Sigmoid colon (tissue), 7 donors: ENCODE measurements at regions of chr18 and their contacts with region 1.

Region 1: DNA sequence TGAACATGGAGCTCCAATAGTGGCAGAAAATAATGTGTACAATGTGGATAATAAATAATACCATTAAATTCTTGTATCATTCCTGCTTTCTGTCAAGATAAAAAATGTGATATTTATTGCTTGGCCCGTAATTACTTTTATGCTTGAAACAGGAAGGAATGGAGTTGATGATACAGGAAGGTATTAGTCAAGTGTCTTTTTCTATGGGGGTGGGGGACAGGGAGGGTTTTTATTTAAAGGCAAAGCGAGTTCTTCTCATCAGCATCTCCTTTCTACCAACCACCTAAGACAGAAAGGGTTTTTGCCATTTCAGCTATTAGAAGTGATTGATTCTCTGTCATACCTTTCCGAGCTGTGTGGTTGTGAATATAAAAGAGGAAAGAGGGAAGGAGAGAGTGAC is 135.3 kb downstream of the DCC start:
- DNase-seq: no peak
- H3K4me3 ChIP-seq: no peak overlapping the region
- H3K27ac ChIP-seq: no peak overlapping the region
- H3K4me1 ChIP-seq: no peaks in the 10 kb centered on the region
- H3K27me3 ChIP-seq: no peaks in the 10 kb centered on the region
- CTCF ChIP-seq: no peak
- EP300 ChIP-seq: no peak
- POLR2A ChIP-seq: no peak

Region 2: GRCh38 chr18:52000435-52000834 is 474.9 kb before region 1 on chr18:
- intact Hi-C with region 1: no loop called
- DNase-seq: no peak
- H3K4me3 ChIP-seq: no peak overlapping the region
- H3K27ac ChIP-seq: no peak overlapping the region
- H3K4me1 ChIP-seq: no peaks in the 10 kb centered on the region
- H3K27me3 ChIP-seq: no peaks in the 10 kb centered on the region
- CTCF ChIP-seq: no peak
- EP300 ChIP-seq: no peak
- POLR2A ChIP-seq: no peak

Region 3: DNA sequence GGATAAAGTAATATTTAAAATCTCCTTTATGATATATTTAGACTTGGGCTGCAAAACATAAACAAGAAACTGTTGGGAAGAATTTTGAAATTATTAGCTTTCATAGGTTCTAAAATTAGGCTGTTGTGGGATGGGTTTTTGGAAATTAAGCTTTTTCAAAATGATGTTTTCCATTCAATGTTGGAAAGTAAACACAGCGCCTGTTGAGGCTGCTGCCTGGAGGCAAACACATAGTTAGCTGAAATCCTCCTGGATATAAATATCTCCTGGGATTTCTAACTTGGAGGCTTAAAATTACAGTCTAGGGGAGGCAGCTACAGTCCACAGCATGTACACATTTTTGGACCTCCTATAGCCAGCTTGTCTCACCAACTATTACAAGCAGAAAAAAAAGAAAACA is 61.9 kb after region 1 on chr18:
- intact Hi-C with region 1: no loop called
- DNase-seq: no peak
- H3K4me3 ChIP-seq: no peak overlapping the region
- H3K27ac ChIP-seq: no peak overlapping the region
- H3K4me1 ChIP-seq: no peaks in the 10 kb centered on the region
- H3K27me3 ChIP-seq: no peaks in the 10 kb centered on the region
- CTCF ChIP-seq: no peak
- EP300 ChIP-seq: no peak
- POLR2A ChIP-seq: no peak

Region 4: DNA sequence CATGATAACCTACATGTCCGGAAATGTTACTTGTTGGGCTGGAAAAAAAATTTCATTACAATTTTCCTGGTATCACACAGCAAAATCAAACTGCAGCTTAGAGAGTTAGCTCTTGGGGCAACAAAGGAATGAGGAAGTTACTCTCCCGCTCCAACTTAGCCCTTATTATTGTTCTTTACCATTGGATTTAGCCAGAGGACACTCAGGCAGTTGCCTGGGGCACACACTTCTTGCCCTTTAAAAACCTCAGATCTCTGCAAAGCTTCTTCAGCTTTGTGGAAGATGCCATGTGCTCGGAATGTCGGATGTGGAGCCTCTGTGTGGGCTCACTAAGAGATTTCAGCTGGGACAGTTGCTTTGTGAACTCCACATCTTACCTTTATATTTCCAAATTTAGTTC is 268.1 kb after region 1 on chr18:
- intact Hi-C with region 1: no loop called
- DNase-seq: no peak
- H3K4me3 ChIP-seq: no peak overlapping the region
- H3K27ac ChIP-seq: no peak overlapping the region
- H3K4me1 ChIP-seq: no peaks in the 10 kb centered on the region
- H3K27me3 ChIP-seq: no peaks in the 10 kb centered on the region
- CTCF ChIP-seq: no peak
- EP300 ChIP-seq: no peak
- POLR2A ChIP-seq: no peak

Region 5: DNA sequence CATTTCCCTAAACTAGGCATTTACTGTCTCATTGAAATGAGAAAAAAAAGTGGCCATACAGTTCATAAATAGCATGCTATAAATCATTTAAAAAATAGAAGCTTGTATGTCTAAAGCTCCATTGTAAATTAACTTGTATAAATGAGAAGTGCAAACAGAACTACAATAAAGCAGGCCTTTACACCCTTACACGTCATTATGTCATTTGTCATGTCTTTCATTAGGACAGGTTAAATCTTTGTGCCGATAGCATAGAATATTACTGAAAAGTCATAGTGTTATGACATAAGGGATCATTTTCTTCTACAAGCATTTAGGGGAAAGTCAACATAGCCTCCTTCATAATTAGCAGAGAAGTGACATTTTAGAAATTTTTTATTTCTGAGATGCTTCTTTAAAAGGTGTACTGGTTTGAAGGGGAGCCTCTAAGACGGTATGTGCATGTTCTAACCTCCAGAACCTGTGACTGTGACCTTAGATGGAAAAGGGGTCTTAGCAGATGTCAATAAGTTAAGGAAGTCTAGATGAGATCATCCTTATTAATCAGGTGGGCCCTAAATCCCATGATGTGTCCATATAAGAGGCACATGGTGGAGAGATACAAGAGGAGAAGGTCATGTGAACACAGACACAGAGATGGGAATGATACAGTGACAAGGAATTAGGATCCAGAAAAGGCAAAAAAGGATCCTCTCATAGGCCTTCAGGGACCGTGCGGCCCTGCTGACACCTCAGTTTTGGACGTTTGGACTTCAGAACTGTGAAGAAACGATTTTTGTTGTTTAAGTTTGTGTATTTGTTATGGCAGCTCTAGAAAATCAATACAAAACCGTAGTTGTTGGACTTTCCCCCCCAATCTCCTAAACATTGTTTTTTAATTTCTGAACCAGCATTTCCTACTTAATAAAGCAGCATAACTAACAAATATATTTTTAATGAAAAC is 885.4 kb after region 1 on chr18:
- intact Hi-C with region 1: loop called (anchors 5 kb)
- DNase-seq: no peak
- H3K4me3 ChIP-seq: no peak overlapping the region
- H3K27ac ChIP-seq: no peak overlapping the region
- H3K4me1 ChIP-seq: no peaks in the 10 kb centered on the region
- H3K27me3 ChIP-seq: no peaks in the 10 kb centered on the region
- CTCF ChIP-seq: no peak
- EP300 ChIP-seq: no peak
- POLR2A ChIP-seq: no peak